Endothelial cell of umbilical vein (primary cell): ENCODE measurements at regions of chr5 and their contacts with region 1.

Region 1: DNA sequence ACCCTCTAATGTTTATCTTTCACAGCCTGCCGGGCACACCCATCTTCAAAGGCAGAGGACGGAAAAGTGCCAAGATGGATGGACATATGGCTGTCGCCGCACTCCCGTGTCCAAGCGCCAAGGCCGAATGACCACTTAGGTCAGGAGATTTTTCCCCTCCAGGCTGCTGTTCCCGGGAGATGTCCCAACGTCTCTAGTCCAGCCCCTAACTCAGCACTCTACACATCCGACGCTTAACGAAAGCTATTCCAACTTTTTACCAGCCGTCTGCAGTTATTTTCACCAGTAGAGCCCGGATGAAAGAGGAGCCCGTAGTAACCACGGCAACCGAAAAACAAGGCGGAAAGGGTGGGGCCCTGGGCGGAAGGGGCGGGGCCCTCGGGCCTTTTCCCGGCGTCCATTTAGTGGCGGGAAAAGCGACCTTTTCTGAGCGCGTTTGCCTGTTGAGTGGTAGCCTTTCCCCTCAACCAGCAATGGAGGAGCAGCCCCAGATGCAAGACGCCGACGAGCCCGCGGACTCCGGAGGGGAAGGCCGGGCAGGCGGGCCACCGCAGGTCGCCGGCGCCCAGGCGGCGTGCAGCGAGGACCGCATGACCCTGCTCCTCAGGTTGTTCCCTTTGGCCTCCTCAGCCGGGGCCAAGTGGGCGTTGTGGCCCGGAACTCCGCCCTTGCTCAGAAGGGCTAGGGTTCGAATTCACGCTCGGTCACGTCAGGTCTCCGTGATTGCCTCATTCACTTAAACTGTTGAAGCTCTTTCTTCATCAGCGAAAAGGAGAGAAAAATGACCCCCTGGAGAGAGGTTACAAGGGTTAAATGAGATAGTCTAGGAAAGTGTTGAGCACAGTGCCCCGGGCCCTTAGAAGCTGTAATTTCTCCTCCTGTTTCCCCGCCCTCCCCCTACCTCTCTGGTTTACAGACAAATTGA is at the start of gene CENPH:
- DNase-seq: peak; percentile 92
- H3K4me3 ChIP-seq: peak within 1 kb of the TSS; percentile 56 to 91 (median 80)
- H3K27ac ChIP-seq: peak within 1 kb of the TSS; percentile 73
- H3K4me1 ChIP-seq: peaks cover 12% of the 10 kb centered on the region
- H3K27me3 ChIP-seq: no peaks in the 10 kb centered on the region
- CTCF ChIP-seq: no peak
- POLR2A ChIP-seq: peak; percentile 78
- total RNA-seq, gene CENPH: 16.4 and 17.1 TPM in 2 replicates

Region 2: DNA sequence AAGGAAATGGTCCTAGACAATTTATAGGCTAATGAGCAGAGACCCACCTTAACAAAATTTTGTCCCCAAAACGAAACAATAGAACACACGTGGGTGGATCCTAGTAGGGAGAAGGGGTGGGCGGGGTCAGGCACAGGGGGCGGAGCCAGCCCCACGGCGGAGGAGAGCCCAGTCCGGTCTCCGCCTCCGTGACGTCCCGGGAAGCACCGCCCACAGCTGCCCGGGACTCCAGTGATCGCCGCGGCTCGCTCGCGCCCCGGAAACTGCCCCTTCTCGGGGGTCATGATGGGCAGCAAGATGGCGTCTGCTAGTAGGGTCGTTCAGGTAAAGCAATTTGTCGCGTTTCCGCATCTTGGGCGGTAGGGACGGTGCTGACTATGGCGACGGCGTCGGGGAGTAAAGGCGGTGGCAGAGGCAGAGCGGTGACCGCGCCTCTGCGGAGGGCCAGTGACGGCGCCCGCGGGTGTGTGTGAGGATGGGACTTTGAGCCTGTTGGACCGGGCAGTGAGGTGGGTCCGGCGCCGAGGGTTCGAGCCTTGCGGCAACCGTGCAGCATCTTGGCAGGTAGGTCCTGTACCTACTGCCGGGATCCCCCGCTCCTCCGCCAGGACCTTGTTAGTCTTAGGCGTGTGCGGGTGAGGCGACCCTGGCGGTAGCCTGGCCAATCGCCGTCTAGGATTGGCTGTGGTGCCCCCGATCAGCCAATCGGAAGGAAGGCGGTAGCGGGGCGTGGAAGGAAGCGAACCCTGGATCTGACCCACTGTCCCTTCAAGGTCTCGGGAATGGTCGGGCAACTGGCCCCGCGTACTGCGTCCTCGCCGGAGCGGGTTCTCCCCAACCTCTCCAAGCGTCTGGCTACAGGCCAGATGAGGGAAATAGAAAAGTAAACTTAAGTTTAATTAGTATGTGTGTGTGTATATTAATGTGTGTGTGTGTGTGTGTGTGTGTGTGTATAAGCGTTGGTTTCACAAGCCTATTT is 28.4 kb after region 1 on chr5:
- CTCF ChIA-PET with region 1: interaction called, 5 read pairs
- POLR2A ChIA-PET with region 1: no interaction called
- dilution Hi-C with region 1: no loop called
- intact Hi-C with region 1: loop called (anchors 1 kb)
- DNase-seq: peak; percentile 92
- H3K4me3 ChIP-seq: peak overlapping the region; percentile 1 to 80 (median 52)
- H3K27ac ChIP-seq: peak overlapping the region; percentile 33
- H3K4me1 ChIP-seq: peaks cover 7% of the 10 kb centered on the region
- H3K27me3 ChIP-seq: no peaks in the 10 kb centered on the region
- CTCF ChIP-seq: peak in 1 of 2 donors; percentile 28
- POLR2A ChIP-seq: peak; percentile 75